Activated CD4-positive, alpha-beta T cell treated with anti-CD3 and anti-CD28 coated beads, Interleukin-2, amount 10 ng/mL, durations not matched to agents 24 days and 14 days (primary cell): ENCODE measurements at regions of chr18 and their contacts with region 1.

Region 1: DNA sequence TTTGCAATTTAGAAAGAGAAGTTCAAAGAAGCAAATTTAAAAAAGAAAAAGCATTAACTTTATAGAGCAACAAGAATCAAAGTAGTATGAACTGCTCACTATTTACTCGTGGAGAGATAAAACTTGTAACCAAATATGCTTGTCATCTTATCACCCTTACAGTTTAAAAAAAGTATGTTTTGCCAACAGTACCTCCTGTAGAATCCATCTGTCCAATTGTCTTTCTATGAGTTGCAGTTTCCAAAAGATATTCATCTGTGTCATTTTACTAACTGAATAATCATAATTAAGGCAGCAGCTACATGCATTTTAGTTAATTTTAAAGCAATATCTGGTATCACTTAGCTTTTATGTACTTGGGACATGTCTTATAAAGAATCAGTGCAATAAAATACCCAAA is 1112.3 kb downstream of the DSC3 start:
- DNase-seq: no peak
- H3K4me3 Mint-ChIP-seq: no peak overlapping the region
- H3K27ac Mint-ChIP-seq: no peak overlapping the region
- H3K4me1 Mint-ChIP-seq: no peaks in the 10 kb centered on the region
- H3K27me3 Mint-ChIP-seq: no peaks in the 10 kb centered on the region

Region 2: GRCh38 chr18:29501952-29502351 is 428.3 kb before region 1 on chr18:
- intact Hi-C with region 1: no loop called
- DNase-seq: no peak
- H3K4me3 Mint-ChIP-seq: no peak overlapping the region
- H3K27ac Mint-ChIP-seq: no peak overlapping the region
- H3K4me1 Mint-ChIP-seq: no peaks in the 10 kb centered on the region
- H3K27me3 Mint-ChIP-seq: no peaks in the 10 kb centered on the region

Region 3: GRCh38 chr18:29596959-29597358 is 333.3 kb before region 1 on chr18:
- intact Hi-C with region 1: no loop called
- DNase-seq: no peak
- H3K4me3 Mint-ChIP-seq: no peak overlapping the region
- H3K27ac Mint-ChIP-seq: no peak overlapping the region
- H3K4me1 Mint-ChIP-seq: no peaks in the 10 kb centered on the region
- H3K27me3 Mint-ChIP-seq: no peaks in the 10 kb centered on the region

Region 4: GRCh38 chr18:29892960-29893558 is 37.2 kb before region 1 on chr18:
- intact Hi-C with region 1: loop called (anchors 5 kb)
- DNase-seq: no peak
- H3K4me3 Mint-ChIP-seq: no peak overlapping the region
- H3K27ac Mint-ChIP-seq: no peak overlapping the region
- H3K4me1 Mint-ChIP-seq: no peaks in the 10 kb centered on the region
- H3K27me3 Mint-ChIP-seq: no peaks in the 10 kb centered on the region